ENCODE measurements at regions of chr13 and their contacts with region 1.

Region 1: DNA sequence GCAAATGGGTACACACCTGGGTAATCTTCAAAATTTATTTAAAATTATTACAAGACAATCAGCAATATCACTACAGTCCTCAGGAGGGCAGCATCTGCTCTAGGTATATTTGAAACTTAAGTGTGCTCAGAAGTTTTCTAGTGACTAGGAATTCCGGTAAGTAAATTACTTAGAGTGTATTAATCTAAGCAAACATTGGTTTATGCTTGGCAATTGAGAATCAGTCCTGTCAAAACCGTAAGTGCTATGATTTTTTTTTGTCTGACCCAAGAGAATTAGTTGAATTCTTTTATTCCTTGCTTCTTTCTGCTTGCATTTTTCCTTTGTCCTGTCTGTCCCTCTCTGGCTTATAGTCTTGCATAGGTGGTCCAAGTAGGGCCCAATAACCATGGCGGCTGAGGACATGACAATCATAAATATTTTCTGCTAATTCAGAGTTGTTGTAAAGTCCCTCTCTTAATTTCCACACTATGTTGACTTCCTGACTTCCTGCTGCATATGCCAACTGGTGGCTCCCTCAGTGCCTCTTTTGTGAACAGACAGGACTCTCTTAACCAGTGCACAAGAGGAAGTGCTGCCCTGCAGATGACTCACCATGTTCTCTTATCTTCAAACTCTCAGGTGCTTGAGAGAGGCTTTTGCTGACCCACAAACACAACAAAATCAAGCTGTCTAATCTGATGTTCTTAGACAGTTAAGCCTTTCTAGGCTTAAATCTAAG is 82.2 kb downstream of the SLAIN1 start:
- DNase-seq: peak in 3 of 4 donors; percentile 57 to 81 (median 69)
- ATAC-seq: peak; percentile 97
- H3K4me3 ChIP-seq: no peak overlapping the region
- H3K27ac ChIP-seq: peak overlapping the region; percentile 41 to 78
- H3K4me1 ChIP-seq: peaks cover 0 to 13% of the 10 kb centered on the region in 2 donors
- H3K27me3 ChIP-seq: no peaks in the 10 kb centered on the region
- CTCF ChIP-seq: peak; percentile 60 to 79

Region 2: GRCh38 chr13:77595166-77595810 is 184.4 kb before region 1 on chr13:
- intact Hi-C with region 1: no loop called
- DNase-seq: no peak
- ATAC-seq: no peak
- H3K4me3 ChIP-seq: no peak overlapping the region
- H3K27ac ChIP-seq: no peak overlapping the region
- H3K4me1 ChIP-seq: no peaks in the 10 kb centered on the region
- H3K27me3 ChIP-seq: peaks cover 0 to 4% of the 10 kb centered on the region in 2 donors
- CTCF ChIP-seq: no peak

Region 3: DNA sequence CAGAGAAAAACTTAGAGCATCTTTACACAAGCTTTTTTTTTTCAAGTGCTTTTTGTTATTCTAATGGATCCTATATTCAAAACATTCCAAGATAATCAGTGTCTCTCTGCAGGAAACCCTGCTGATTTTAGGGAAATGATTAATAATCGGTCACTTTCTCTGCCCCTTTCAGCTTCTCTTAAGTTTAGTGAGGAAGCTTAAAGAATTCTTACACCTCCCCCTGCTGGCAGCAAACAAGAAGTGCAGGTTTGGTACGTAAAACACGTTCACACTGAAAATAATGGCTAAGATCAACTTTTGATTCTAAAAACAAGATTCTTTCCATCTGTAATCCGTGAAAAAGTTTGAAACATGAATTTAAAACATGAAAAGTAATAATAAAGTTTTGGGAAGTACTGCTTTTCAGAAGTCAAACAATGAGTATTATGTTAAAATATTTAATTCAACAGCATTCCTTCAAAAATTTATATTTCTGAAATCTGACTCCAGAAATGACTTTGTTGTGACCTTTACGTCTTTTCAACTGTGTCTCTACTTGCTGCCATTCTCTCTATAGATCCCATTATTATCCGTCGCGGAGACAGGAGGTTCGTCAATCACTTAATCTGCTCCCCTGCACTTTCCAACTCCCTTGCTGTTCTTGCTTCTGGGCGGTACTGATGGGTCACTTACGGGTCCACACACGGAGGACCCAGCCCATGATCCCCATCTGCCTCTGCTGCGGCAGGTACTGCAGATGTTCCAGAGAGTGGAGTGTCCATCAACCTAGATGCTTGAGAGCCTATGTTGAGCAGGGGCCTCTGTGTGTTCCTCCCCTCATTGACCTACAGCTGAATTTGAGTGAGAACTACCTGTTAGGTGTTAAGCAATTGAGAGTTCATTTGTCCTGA is 342.0 kb after region 1 on chr13:
- intact Hi-C with region 1: loop called in 1 of 2 experiments (anchors 5 kb)
- DNase-seq: peak in 2 of 4 donors; percentile 58 to 80
- ATAC-seq: peak; percentile 84
- H3K4me3 ChIP-seq: no peak overlapping the region
- H3K27ac ChIP-seq: no peak overlapping the region
- H3K4me1 ChIP-seq: peaks cover 0 to 11% of the 10 kb centered on the region in 2 donors
- H3K27me3 ChIP-seq: no peaks in the 10 kb centered on the region
- CTCF ChIP-seq: peak; percentile 83 to 85

Region 4: DNA sequence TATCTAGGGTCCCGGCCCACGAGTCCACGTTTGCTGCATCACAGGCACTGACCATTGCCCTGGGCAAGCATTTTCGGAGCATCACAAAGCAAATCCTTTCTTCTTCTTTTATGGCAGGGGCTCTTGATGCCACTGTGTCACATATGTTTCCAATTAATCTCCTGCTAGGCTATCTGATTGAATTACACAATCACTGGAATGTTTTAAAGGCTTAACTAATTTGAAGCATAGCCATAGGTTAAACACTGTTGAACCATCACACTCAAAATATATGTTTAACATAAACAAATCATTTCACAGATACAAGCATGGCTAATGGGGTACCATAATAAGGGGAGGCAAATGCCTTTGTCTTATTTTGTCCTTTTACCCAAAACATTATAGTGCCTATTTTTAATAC is 485.4 kb after region 1 on chr13:
- intact Hi-C with region 1: no loop called
- DNase-seq: no peak
- ATAC-seq: no peak
- H3K4me3 ChIP-seq: no peak overlapping the region
- H3K27ac ChIP-seq: no peak overlapping the region
- H3K4me1 ChIP-seq: no peaks in the 10 kb centered on the region
- H3K27me3 ChIP-seq: no peaks in the 10 kb centered on the region
- CTCF ChIP-seq: no peak

Measured in left lung (tissue), 14 donors.